Stomach (tissue), 19 donors: ENCODE measurements at regions of chr3 and their contacts with region 1.

Region 1: DNA sequence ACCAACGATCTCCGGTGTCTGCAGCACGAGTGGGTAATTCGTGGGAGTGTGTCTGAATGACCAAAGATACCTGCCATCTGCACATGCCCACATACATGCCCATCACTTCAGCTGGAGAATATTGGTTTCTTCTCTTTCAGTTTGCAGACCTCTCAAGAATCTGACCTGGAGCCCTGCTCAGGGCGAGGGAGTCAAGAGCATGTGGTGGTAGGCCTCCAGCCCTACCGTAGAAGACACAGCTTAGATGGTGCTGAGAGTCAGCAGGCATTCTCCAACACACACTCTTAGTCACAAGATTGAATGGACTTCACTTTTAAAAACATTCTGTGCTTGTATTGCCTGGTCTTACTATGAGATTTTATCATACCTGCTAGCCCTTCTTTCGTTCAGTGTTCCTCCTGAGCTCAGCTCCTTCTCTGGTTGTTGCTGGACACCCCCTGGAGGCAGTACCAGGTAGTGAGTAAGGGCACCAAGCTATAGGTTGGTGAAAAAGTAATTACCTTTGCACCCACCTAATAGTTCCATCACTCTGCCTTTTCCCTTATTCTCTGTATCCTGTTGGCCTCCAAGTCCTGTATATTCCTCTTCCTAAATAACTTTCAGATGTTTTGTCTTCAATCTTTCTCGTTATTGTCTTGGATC is 252.0 kb downstream of the CACNA2D3 start:
- DNase-seq: peak; percentile 55 to 62
- H3K4me3 ChIP-seq: no peak overlapping the region
- H3K27ac ChIP-seq: no peak overlapping the region
- H3K4me1 ChIP-seq: no peaks in the 10 kb centered on the region
- H3K27me3 ChIP-seq: no peaks in the 10 kb centered on the region
- CTCF ChIP-seq: peak in 5 of 7 experiments; percentile 36 to 67 (median 59)
- EP300 ChIP-seq: no peak
- POLR2A ChIP-seq: no peak

Region 2: DNA sequence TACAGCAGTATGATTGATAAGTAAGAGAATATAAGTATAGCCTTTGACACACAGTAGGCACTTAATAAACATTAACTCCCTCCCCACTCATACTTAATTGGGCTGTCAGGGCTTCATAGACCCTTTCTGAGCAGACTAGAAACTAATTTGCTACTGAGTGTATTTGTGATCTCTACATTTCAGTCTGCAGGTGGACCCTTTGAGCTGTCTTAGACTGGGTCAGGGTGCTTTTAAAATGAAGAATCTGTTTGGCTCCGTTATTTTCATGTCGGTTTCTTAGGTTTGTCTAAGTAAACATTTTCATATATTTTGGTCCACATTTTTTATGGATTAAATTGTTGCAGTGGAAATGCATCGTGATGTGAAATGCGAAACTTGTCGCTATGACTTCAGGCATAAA is 432.4 kb before region 1 on chr3:
- intact Hi-C with region 1: loop called (anchors 10 kb)
- DNase-seq: peak in 1 of 2 donors; percentile 28
- H3K4me3 ChIP-seq: no peak overlapping the region
- H3K27ac ChIP-seq: no peak overlapping the region
- H3K4me1 ChIP-seq: no peaks in the 10 kb centered on the region
- H3K27me3 ChIP-seq: peaks cover 0 to 26% (median 0%) of the 10 kb centered on the region in 3 donors
- CTCF ChIP-seq: no peak
- EP300 ChIP-seq: no peak
- POLR2A ChIP-seq: no peak

Region 3: GRCh38 chr3:54134713-54135112 is 239.6 kb before region 1 on chr3:
- intact Hi-C with region 1: no loop called
- DNase-seq: no peak
- H3K4me3 ChIP-seq: no peak overlapping the region
- H3K27ac ChIP-seq: no peak overlapping the region
- H3K4me1 ChIP-seq: no peaks in the 10 kb centered on the region
- H3K27me3 ChIP-seq: peaks cover 0 to 5% (median 0%) of the 10 kb centered on the region in 3 donors
- CTCF ChIP-seq: no peak
- EP300 ChIP-seq: no peak
- POLR2A ChIP-seq: no peak

Region 4: GRCh38 chr3:54146506-54147239 is 227.7 kb before region 1 on chr3:
- intact Hi-C with region 1: loop called (anchors 10 kb)
- DNase-seq: peak; percentile 67 to 72
- H3K4me3 ChIP-seq: no peak overlapping the region
- H3K27ac ChIP-seq: no peak overlapping the region
- H3K4me1 ChIP-seq: peaks cover 0 to 10% (median 2%) of the 10 kb centered on the region in 4 donors
- H3K27me3 ChIP-seq: no peaks in the 10 kb centered on the region
- CTCF ChIP-seq: peak in 5 of 7 experiments; percentile 45 to 74 (median 70)
- EP300 ChIP-seq: no peak
- POLR2A ChIP-seq: no peak